Gastrocnemius medialis (tissue), 4 donors: ENCODE measurements at regions of chr3 and their contacts with region 1.

Region 1: DNA sequence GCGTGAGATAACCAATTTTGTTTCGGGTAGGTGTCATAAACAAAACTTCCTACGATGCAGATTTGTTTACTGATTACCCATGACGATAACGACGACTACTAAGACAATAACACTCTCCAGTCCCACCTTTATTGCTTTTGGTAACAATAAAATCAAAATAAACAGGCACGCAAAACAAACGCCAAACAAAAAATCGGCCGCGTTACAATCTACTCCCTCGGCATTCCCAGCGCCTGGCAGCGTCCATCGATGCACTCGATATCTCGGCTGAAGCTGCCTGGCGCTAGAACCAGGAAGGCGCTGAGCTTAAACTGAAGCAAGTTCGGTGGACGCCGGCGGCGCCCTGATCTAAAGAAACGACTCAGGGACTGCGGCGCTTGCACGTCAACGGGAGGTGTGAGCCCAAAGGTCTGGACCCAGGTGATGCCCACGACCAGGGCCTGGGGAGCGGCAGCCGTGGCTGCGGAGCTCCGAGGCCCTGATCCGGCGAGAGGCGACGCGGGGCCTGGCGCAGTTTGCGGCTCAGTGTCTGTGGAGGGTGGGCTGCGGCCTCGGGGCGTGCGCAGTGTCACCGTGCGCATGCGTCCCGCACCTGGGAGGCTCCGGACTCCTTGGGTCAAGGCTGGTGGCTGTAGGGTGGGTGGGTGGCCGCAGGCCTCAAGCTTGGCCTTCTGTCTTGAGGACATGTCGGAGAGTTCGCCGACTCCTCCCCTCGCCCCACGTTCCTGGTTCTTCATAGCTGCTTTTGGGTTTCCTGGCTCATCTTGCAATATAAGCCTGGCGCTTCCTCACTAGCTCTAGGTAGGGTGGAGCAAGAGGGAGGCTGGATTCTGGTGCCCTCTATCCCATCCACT is at the start of gene RSRC1:
- DNase-seq: peak; percentile 78 to 80
- ATAC-seq: peak; percentile 93 to 94
- H3K4me3 ChIP-seq: peak within 1 kb of the TSS; percentile 80 to 97 (median 90)
- H3K27ac ChIP-seq: peak within 1 kb of the TSS; percentile 80 to 89 (median 86)
- H3K4me1 ChIP-seq: peaks cover 17 to 40% of the 10 kb centered on the region in 2 donors
- H3K27me3 ChIP-seq: peaks cover 40 to 42% (median 40%) of the 10 kb centered on the region in 3 donors
- CTCF ChIP-seq: peak in 1 of 5 experiments; percentile 7
- POLR2A ChIP-seq: peak; percentile 16 to 45
- total RNA-seq, gene RSRC1: 27.7 to 36.7 (median 31.9) TPM

Region 2: DNA sequence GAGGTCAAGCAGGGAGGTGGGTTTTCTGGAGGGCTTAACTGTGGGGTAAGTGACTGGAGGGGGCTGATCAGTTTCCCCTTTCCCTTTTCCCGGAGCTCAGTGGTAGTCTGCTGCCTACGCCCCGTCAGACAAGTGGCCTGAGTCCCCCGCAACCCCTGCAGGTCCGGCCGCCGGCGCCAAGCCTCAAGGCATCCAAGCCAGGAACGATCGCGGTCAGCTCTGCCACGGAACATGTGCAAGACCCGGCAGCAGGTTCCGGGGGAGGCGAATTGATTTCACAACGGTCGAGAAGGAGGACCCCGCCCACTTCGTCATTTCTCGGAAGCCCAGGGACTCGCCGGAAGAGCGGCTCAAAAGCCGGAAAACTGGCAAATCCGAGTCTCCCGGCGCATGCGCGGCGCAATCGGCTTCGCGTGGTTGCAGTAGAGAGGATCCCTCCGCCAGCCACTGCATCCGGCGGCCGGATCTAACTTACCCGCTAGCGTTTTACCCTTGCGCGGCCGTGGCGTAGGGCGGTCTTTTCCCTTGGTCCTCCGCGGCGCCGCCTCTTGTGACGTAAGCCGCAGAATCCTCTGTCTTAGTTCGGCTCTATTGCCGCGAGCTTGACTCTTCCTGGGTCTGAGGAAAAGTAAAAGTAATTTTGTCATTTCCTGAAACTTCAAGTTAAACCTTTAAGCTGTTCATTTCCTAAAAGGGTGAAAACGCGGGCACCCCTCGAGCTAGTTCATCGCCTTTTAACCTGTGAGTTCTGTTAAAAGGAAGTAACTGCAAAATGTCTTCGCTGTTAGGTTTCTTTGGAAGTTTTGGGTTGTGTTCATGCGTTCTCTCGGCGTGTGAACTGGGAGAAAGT is 935.2 kb before region 1 on chr3:
- in situ Hi-C with region 1: no loop called
- intact Hi-C with region 1: loop called (anchors 10 kb)
- DNase-seq: peak; percentile 99
- ATAC-seq: peak; percentile 97
- H3K4me3 ChIP-seq: peak overlapping the region; percentile 70 to 73 (median 72)
- H3K27ac ChIP-seq: peak overlapping the region; percentile 92 to 98 (median 95)
- H3K4me1 ChIP-seq: peaks cover 13 to 14% of the 10 kb centered on the region in 2 donors
- H3K27me3 ChIP-seq: no peaks in the 10 kb centered on the region
- CTCF ChIP-seq: peak in 1 of 5 experiments; percentile 43
- POLR2A ChIP-seq: peak; percentile 89 to 95

Region 3: GRCh38 chr3:157487339-157487738 is 622.7 kb before region 1 on chr3:
- in situ Hi-C with region 1: no loop called
- intact Hi-C with region 1: no loop called
- DNase-seq: no peak
- ATAC-seq: no peak
- H3K4me3 ChIP-seq: no peak overlapping the region
- H3K27ac ChIP-seq: no peak overlapping the region
- H3K4me1 ChIP-seq: no peaks in the 10 kb centered on the region
- H3K27me3 ChIP-seq: no peaks in the 10 kb centered on the region
- CTCF ChIP-seq: no peak
- POLR2A ChIP-seq: no peak

Region 4: DNA sequence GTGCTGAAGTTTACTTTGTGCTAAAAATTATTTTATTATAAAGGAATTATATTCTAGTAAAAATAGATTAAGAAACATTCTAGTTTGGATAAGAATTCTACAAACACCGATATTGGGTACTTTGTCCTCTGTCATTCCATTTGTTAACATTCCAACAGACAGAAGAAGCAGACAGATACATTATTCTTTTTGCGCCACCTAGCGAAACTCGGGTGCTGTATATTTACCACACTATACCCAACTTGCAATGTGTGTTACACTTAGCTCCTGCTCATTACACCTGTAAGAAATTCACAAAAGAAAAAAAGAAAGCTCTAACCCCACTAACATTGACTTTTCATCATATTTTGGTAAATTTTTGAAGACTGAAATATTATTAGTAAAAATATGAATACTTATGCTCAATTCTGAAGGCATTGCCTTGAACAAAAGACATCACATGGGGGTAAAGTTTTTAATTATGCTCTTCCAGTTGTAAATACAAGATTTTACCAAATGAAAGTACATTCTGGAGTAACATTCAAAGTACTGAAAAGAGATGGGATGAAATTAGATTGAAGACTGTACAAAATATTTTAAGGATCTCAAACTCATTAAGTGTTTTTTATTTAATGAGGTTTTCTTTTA is 324.5 kb after region 1 on chr3:
- in situ Hi-C with region 1: no loop called
- intact Hi-C with region 1: loop called (anchors 10 kb)
- DNase-seq: peak; percentile 4 to 34
- ATAC-seq: peak; percentile 66 to 83
- H3K4me3 ChIP-seq: no peak overlapping the region
- H3K27ac ChIP-seq: no peak overlapping the region
- H3K4me1 ChIP-seq: no peaks in the 10 kb centered on the region
- H3K27me3 ChIP-seq: no peaks in the 10 kb centered on the region
- CTCF ChIP-seq: peak; percentile 45 to 69 (median 50)
- POLR2A ChIP-seq: no peak

Region 5: GRCh38 chr3:158548691-158549090 is 438.7 kb after region 1 on chr3:
- in situ Hi-C with region 1: no loop called
- intact Hi-C with region 1: no loop called
- DNase-seq: no peak
- ATAC-seq: no peak
- H3K4me3 ChIP-seq: no peak overlapping the region
- H3K27ac ChIP-seq: no peak overlapping the region
- H3K4me1 ChIP-seq: peaks cover 8% of the 10 kb centered on the region in 2 donors
- H3K27me3 ChIP-seq: no peaks in the 10 kb centered on the region
- CTCF ChIP-seq: no peak
- POLR2A ChIP-seq: no peak